ENCODE measurements at regions of chr6 and their contacts with region 1.

Region 1: GRCh38 chr6:16752236-16752867 is 8.9 kb downstream of the ATXN1 start:
- DNase-seq: peak; percentile 91
- H3K4me3 ChIP-seq: no peak overlapping the region
- H3K27ac ChIP-seq: peak overlapping the region; percentile 48
- H3K4me1 ChIP-seq: peaks cover 17% of the 10 kb centered on the region
- H3K27me3 ChIP-seq: no peaks in the 10 kb centered on the region
- CTCF ChIP-seq: no peak
- POLR2A ChIP-seq: no peak

Region 2: DNA sequence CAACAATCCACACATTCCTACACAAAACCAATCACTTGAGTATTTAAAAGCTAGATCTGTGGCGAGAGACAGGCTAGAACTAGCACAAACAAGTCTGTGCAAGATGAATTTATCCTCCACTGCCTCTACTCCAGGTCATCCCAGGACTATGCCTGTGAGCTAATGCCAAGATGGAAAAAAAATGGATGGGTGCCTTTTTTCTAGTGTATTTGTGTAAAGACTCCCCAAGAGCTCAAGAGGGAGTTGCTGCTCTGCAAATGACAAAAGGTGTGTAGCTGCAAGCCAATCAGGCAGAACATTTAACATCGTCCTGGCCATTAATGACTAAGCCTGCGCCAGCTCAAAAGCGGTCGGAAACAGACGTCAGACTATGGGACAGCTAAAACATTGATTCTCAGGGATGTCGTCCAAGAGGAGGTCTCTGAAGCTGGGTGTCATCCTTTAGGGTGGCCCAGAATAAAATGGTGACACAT is 13.0 kb before region 1 on chr6:
- CTCF ChIA-PET with region 1: interaction called, 8 read pairs
- POLR2A ChIA-PET with region 1: no interaction called
- dilution Hi-C with region 1: no loop called
- intact Hi-C with region 1: loop called (anchors 1 kb)
- DNase-seq: no peak
- H3K4me3 ChIP-seq: no peak overlapping the region
- H3K27ac ChIP-seq: no peak overlapping the region
- H3K4me1 ChIP-seq: peaks cover 29% of the 10 kb centered on the region
- H3K27me3 ChIP-seq: no peaks in the 10 kb centered on the region
- CTCF ChIP-seq: no peak
- POLR2A ChIP-seq: no peak

Region 3: GRCh38 chr6:16969699-16970655 is 217.6 kb after region 1 on chr6:
- CTCF ChIA-PET with region 1: no interaction called
- POLR2A ChIA-PET with region 1: no interaction called
- dilution Hi-C with region 1: no loop called
- intact Hi-C with region 1: no loop called
- DNase-seq: no peak
- H3K4me3 ChIP-seq: no peak overlapping the region
- H3K27ac ChIP-seq: no peak overlapping the region
- H3K4me1 ChIP-seq: no peaks in the 10 kb centered on the region
- H3K27me3 ChIP-seq: peaks cover 18 to 28% of the 10 kb centered on the region in 2 experiments
- CTCF ChIP-seq: no peak
- POLR2A ChIP-seq: no peak